GM12878 (cell line): ENCODE measurements at regions of chr17 and their contacts with region 1.

Region 1: DNA sequence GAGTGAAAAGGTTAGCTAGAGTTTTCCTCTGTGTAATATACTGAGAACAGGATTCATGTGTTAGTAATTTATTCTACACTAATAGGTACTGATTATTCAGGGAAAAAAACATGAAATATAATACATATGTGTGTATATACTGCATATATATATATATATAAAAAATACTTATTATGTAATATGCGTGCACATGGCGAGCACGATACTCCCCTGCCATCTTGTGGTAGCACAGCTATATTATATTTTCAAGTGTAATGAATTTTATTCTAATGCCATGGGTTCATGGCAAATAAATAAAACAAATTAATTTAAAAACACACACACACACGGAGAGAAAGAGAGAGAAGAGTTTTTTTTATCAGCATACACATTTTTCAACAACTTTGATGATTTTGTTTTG is 460.6 kb downstream of the KCNJ2 start:
- DNase-seq: no peak
- ATAC-seq: no peak
- H3K4me3 ChIP-seq: no peak overlapping the region
- H3K27ac ChIP-seq: no peak overlapping the region
- H3K4me1 ChIP-seq: no peaks in the 10 kb centered on the region
- H3K27me3 ChIP-seq: no peaks in the 10 kb centered on the region
- CTCF ChIP-seq: peak in 1 of 3 experiments; percentile 22; a peak in 1 of 6 replicates
- EP300 ChIP-seq: no peak
- POLR2A ChIP-seq: no peak
- RAD21 ChIP-seq: peak; percentile 65

Region 2: DNA sequence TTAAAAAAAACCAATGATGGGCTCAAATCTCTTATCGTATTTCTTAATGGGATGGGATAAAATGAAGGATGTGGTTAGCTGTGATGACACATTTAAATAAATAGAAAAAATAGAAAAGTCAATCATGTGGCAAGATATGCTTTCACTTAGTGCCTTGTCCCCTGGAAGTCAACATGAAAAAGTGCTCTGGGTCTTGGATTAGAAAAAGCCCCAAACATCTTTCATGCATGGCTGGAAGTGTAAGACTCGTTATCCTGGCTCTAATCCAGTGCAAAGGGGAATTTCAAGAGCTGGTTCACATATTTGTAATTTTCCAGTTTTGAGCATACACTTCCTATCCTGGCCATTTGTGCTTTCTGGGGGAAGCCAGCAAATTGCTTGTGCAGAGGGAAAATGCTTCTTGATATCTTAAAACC is 1054.5 kb before region 1 on chr17:
- CTCF ChIA-PET with region 1: interaction called, 5 read pairs
- POLR2A ChIA-PET with region 1: no interaction called
- RAD21 ChIA-PET with region 1: interaction called, 11 read pairs
- SMC1A ChIA-PET with region 1: no interaction called
- in situ Hi-C with region 1: no loop called
- intact Hi-C with region 1: no loop called
- DNase-seq: no peak
- ATAC-seq: no peak
- H3K4me3 ChIP-seq: no peak overlapping the region
- H3K27ac ChIP-seq: no peak overlapping the region
- H3K4me1 ChIP-seq: 0 out of 2 replicates have a peak, but pooled peaks cover 5% of the 10 kb centered on the region
- H3K27me3 ChIP-seq: peaks cover 0 to 6% of the 10 kb centered on the region in 2 experiments; a peak in 1 of 4 replicates
- CTCF ChIP-seq: no peak
- EP300 ChIP-seq: no peak
- POLR2A ChIP-seq: no peak
- RAD21 ChIP-seq: no peak